Colonic mucosa (tissue), 4 donors: ENCODE measurements at regions of chr4 and their contacts with region 1.

Region 1: DNA sequence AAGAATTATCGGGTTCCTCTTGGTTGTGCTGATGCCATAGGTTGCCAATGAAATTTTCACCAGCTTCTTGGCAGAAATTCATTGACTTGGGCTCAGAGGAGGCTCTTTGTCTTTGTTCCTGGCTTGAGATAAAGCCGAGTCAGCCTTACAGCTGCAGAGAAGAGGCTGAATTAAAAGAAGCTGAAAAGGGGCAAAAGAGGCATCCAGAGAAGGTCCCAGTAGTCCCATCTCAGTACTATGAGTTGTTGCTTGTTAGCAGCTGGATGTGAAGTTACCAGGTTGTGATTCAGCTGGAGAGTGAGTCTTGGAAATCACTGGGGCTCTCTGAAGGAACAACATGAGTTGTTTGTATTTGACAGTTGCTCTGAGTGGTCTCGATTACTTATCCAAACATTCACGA is 59.7 kb downstream of the SMAD1 start:
- DNase-seq: no peak
- H3K4me3 ChIP-seq: no peak overlapping the region
- H3K27ac ChIP-seq: no peak overlapping the region
- H3K4me1 ChIP-seq: no peaks in the 10 kb centered on the region
- H3K27me3 ChIP-seq: no peaks in the 10 kb centered on the region
- CTCF ChIP-seq: no peak

Region 2: DNA sequence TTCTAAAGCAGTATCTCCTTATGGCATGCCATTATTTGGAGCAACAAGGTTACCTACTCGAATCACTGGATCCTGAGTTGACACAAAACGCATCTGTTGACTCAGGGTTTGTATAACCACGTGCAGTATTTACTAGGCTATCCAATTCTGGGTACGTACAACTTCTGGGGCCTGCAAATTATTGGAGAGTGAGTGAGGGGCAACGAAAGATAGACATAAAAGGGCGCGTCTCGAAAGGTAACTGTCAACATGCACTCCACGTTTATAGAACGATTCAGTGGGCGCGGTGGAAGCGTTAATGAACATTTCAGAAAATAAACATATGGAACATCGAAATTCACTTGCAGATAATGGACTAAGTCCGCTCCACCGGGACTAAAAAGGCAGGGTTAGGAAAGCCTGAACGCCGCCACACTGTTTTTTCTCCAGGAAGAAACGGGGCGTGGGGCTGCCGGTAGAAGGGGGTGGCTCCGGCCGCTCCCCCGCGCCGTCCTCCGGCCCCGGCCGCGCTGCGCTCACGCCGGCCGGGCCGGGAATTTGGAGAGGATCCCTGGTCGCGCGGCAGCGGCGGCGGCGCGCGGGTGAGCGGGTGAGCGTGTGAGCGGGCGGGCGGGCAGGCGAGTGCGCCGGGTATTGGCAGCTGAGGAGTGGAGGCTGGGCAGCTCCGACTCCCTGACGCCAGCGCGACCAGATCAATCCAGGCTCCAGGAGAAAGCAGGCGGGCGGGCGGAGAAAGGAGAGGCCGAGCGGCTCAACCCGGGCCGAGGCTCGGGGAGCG is 60.0 kb before region 1 on chr4 and contains the start of gene SMAD1:
- intact Hi-C with region 1: loop called (anchors 5 kb)
- DNase-seq: peak; percentile 77
- H3K4me3 ChIP-seq: peak within 1 kb of the TSS; percentile 83
- H3K27ac ChIP-seq: peak within 1 kb of the TSS; percentile 92
- H3K4me1 ChIP-seq: no peaks in the 10 kb centered on the region
- H3K27me3 ChIP-seq: no peaks in the 10 kb centered on the region
- CTCF ChIP-seq: no peak
- total RNA-seq, gene SMAD1: 40.4 to 47.3 TPM

Region 3: DNA sequence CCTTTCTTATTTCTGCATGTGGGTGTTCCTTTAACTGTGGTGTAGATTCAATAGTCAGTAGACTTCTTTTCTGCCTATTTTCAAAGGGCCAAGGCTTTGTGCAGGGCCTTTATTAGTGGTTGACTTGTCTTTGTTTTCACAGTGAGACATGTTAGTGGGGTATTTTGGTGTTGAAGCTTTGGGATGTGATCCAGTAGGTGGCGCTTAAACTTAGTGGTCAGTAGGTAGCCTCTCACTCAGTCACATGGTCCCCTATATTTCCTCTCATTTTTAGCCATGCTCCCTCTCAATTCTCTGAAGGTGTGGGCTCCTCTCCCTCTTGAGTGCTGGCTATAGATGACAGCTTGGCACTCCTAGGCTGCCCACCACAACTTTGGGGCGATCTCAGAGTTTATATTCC is 1003.8 kb after region 1 on chr4:
- intact Hi-C with region 1: no loop called
- DNase-seq: no peak
- H3K4me3 ChIP-seq: no peak overlapping the region
- H3K27ac ChIP-seq: no peak overlapping the region
- H3K4me1 ChIP-seq: no peaks in the 10 kb centered on the region
- H3K27me3 ChIP-seq: no peaks in the 10 kb centered on the region
- CTCF ChIP-seq: no peak